ENCODE measurements at regions of chr4 and their contacts with region 1.

Region 1: GRCh38 chr4:57200928-57201327 is 90.7 kb upstream of the IGFBP7 start:
- DNase-seq: no peak
- ATAC-seq: no peak
- H3K4me3 ChIP-seq: no peak overlapping the region
- H3K27ac ChIP-seq: no peak overlapping the region
- H3K4me1 ChIP-seq: no peaks in the 10 kb centered on the region
- H3K27me3 ChIP-seq: peaks cover 8% of the 10 kb centered on the region; the same call in 1 of the 2 replicates
- CTCF ChIP-seq: no peak
- POLR2A ChIP-seq: no peak
- RAD21 ChIP-seq: no peak

Region 2: GRCh38 chr4:57190601-57191481 is 10.1 kb before region 1 on chr4:
- CTCF ChIA-PET with region 1: interaction called, 10 read pairs
- POLR2A ChIA-PET with region 1: no interaction called
- RAD21 ChIA-PET with region 1: no interaction called
- intact Hi-C with region 1: no loop called
- DNase-seq: peak; percentile 35
- ATAC-seq: peak; percentile 90
- H3K4me3 ChIP-seq: no peak overlapping the region
- H3K27ac ChIP-seq: no peak overlapping the region
- H3K4me1 ChIP-seq: no peaks in the 10 kb centered on the region
- H3K27me3 ChIP-seq: no peaks in the 10 kb centered on the region; the same call in 1 of the 2 replicates
- CTCF ChIP-seq: peak in 2 of 3 experiments; percentile 88 to 91; a peak in 4 of 6 replicates
- POLR2A ChIP-seq: no peak
- RAD21 ChIP-seq: peak; percentile 18; the same call in 1 of the 2 replicates